ENCODE measurements at regions of chr9 and their contacts with region 1.

Region 1: DNA sequence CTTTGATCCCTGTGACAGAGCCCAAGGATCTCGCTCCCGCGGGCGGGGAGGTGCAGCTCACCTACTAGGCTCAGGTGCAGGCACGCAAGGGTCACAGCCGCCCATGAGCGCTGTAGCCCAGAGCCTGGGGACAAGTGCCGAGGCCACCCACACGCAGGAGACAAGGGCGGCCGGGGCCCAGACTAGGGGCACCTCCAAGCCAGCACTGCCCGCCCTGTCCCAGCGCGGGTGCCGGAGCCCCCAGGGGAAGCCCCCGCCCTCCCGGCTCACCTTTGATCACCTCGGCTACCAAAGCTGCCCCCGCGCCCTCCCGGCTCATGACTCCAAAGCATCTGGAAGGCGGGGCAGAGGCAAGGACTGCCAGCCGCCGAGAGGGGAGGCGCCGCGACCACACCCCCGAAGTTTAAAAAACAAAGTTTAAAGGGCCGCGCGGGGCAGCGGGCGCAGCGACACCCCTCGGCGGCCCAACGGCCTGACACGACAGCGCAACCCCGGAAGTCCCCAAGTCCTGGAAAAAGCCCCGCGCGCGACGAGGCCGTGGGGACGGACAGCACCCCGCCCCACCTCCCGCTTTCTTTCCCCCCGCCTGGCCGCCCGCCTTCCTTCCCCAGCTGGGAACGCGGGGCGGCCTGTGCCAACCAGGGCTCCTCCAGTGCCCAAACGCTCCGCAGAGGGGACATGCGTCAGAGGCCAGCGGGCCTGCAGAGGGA is 53.0 kb downstream of the CDC14B start:
- DNase-seq: peak; percentile 85
- ATAC-seq: peak; percentile 78
- H3K4me3 Mint-ChIP-seq: peak overlapping the region; percentile 66
- H3K27ac Mint-ChIP-seq: peak overlapping the region; percentile 82
- H3K4me1 Mint-ChIP-seq: peaks cover 27% of the 10 kb centered on the region
- H3K27me3 Mint-ChIP-seq: peaks cover 2% of the 10 kb centered on the region

Region 2: GRCh38 chr9:96478829-96479371 is 87.8 kb before region 1 on chr9:
- CTCF ChIA-PET with region 1: interaction called, 4 read pairs
- POLR2A ChIA-PET with region 1: no interaction called
- intact Hi-C with region 1: loop called in 1 of 2 experiments (anchors 1 kb)
- DNase-seq: peak; percentile 59
- ATAC-seq: peak; percentile 83
- H3K4me3 Mint-ChIP-seq: no peak overlapping the region
- H3K27ac Mint-ChIP-seq: peak overlapping the region; percentile 72
- H3K4me1 Mint-ChIP-seq: peaks cover 28% of the 10 kb centered on the region
- H3K27me3 Mint-ChIP-seq: no peaks in the 10 kb centered on the region

Region 3: GRCh38 chr9:96486368-96487028 is 80.2 kb before region 1 on chr9:
- CTCF ChIA-PET with region 1: interaction called, 4 read pairs
- POLR2A ChIA-PET with region 1: no interaction called
- intact Hi-C with region 1: loop called in 1 of 2 experiments (anchors 2 kb)
- DNase-seq: no peak
- ATAC-seq: no peak
- H3K4me3 Mint-ChIP-seq: no peak overlapping the region
- H3K27ac Mint-ChIP-seq: no peak overlapping the region
- H3K4me1 Mint-ChIP-seq: peaks cover 28% of the 10 kb centered on the region
- H3K27me3 Mint-ChIP-seq: no peaks in the 10 kb centered on the region

Region 4: DNA sequence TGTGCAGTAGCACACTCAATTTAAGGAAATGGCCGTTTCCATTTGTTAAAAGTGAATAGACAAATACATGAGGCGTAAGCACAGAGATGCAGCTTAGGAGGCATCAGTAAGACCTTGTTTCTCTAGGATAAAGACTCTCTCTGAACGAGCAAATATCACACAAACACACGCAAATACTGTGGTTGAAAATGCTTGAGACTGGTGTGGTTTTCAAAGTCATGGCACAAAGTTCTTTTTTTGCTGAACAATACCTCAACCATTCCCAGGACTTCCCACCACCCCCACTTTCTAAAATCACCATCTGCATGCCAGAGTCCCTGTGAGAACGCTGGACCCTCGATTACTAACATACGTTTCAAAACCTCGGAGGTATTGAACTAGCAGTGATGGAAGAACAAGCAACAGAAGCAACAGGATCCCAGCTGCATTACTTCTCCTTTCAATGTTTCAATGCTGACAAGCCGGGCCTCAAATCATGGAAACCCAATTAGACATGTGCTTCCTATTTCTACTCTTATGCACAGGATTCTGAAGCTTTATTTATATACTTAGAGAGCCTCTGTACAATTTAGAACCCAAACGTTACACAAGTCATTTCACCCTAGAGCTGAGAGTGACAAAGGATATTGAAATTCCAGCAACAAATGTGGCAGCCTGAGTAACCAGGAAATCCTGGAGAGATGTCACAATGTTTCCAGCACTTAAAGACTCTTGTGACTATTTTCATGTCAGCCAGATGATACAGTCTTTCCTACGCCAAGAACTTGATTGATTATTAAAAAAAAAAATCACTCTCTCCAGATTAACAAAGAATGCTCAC is 10.9 kb before region 1 on chr9:
- CTCF ChIA-PET with region 1: interaction called, 10 read pairs
- POLR2A ChIA-PET with region 1: interaction called, 3 read pairs
- intact Hi-C with region 1: loop called in 1 of 2 experiments (anchors 1 kb)
- DNase-seq: no peak
- ATAC-seq: no peak
- H3K4me3 Mint-ChIP-seq: no peak overlapping the region
- H3K27ac Mint-ChIP-seq: no peak overlapping the region
- H3K4me1 Mint-ChIP-seq: peaks cover 46% of the 10 kb centered on the region
- H3K27me3 Mint-ChIP-seq: peaks cover 2% of the 10 kb centered on the region

Region 5: GRCh38 chr9:96619491-96620154 is 53.0 kb after region 1 on chr9 and contains the start of gene CDC14B:
- CTCF ChIA-PET with region 1: no interaction called
- POLR2A ChIA-PET with region 1: no interaction called
- intact Hi-C with region 1: loop called in 1 of 2 experiments (anchors 1 kb)
- DNase-seq: peak; percentile 90
- ATAC-seq: peak; percentile 82
- H3K4me3 Mint-ChIP-seq: peak within 1 kb of the TSS; percentile 66
- H3K27ac Mint-ChIP-seq: peak within 1 kb of the TSS; percentile 55
- H3K4me1 Mint-ChIP-seq: peaks cover 8% of the 10 kb centered on the region
- H3K27me3 Mint-ChIP-seq: peaks cover 39% of the 10 kb centered on the region
- total RNA-seq, gene CDC14B: 1.1 to 1.5 TPM